ENCODE measurements at regions of chr15 and their contacts with region 1.

Region 1: GRCh38 chr15:66946578-66947164 is 118.7 kb upstream of the SMAD3 start:
- DNase-seq: peak; percentile 76
- ATAC-seq: peak; percentile 81 to 84
- H3K4me3 ChIP-seq: no peak overlapping the region
- H3K27ac ChIP-seq: no peak overlapping the region
- H3K4me1 ChIP-seq: peaks cover 12% of the 10 kb centered on the region
- H3K27me3 ChIP-seq: no peaks in the 10 kb centered on the region
- CTCF ChIP-seq: peak; percentile 93

Region 2: DNA sequence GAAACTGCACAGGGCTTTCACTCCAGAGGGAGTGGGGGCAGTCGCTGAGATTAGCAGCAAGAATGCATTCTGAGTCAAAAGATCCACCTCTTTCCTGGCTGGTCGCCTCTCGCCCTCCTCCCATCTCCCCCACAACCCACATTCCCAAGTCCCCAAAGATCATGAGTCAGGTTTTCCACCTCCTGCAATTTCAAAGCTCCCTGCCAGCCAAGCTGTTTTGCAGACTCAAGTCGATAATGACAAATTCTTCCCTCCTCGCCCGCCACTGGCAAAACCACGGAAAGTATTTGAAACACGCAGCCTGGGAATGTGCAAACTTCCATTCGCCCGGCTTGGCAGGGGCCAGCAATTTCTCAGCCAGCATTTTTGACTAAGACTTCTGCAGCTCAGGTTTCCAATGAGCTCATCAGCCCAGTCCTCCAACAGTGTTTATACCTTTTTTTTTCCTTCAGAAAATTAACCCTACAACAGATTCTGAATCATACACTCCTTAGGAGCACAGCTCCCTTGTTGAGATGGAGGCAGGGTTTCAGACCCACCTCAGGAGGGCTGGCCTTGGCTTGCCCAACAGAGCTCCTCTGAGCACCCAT is 63.3 kb before region 1 on chr15:
- intact Hi-C with region 1: no loop called
- DNase-seq: peak; percentile 73
- ATAC-seq: peak; percentile 81 to 89
- H3K4me3 ChIP-seq: no peak overlapping the region
- H3K27ac ChIP-seq: peak overlapping the region; percentile 48
- H3K4me1 ChIP-seq: peaks cover 21% of the 10 kb centered on the region
- H3K27me3 ChIP-seq: no peaks in the 10 kb centered on the region
- CTCF ChIP-seq: no peak

Region 3: DNA sequence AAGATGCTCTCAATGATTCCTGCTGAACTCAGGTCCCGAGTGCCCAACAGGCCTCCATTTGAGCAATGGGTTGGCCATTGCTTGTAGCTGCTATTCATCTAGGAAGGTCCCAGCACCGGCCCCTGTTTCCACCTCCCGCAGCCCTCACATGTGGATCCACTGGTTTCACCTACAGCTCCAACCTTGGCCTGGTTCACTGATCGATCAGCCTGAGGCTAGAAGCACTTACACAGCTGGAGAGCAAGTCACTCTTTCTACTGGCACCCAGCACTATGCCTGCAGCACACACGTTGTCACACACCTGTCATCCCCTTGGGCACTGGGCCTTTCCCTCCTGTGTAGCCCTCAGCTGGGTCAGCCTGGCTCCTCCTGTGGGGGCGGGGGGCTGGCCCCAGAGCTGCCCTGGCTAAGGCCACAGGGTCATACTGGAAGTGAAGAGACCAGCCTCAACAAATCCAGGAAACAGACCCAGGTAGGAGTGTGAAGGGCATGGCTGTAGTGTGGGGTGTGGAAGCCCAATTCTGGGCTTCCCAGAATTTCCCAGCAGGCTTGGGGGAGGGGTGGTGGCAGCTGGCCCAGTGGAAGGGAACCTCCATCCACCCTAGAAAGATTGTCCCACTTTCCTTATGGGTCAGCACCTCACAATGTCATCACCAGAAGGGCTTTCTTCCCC is 77.1 kb after region 1 on chr15:
- intact Hi-C with region 1: no loop called
- DNase-seq: no peak
- ATAC-seq: peak; percentile 12 to 28
- H3K4me3 ChIP-seq: no peak overlapping the region
- H3K27ac ChIP-seq: no peak overlapping the region
- H3K4me1 ChIP-seq: peaks cover 39% of the 10 kb centered on the region
- H3K27me3 ChIP-seq: no peaks in the 10 kb centered on the region
- CTCF ChIP-seq: no peak

Region 4: DNA sequence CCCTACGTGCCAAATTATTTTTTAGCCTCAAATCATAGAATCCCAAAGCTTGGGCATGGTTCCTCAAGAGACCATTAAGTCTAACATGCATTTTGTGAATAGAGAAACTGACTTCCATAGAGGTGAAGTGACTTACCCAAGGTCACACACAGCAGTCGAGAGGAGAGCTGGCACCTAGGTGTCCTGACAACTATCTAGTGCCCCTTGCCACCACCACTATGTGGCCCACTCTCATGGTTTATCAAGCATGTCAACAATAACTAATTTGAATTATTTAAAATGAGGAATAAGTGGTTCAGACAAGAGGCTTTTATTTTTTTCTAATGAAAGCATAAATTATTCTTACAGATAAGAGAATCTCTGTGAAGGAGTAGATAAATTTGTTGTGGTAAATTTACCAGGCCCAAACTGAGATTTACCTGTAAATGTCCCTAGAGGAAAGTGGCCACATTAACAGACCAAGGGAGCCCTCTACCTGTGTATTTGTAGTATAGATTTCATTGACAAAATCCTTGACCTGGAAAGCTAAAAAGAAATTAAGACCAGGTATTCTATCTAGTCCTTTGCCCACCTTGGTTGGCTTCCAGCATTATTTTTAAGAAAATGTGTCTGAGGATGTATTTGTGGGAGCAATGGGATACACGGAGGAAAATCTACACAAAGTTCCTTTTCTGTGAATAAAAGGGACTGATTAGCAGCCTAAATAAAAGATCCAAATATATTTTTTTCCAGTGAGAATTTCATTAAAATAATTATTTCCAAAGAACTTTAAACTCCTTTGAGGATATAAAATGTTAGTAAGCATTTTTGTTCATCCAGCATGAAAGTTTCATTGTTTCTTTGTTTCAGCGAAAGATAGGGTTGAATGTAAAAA is 357.1 kb after region 1 on chr15:
- intact Hi-C with region 1: loop called (anchors 10 kb)
- DNase-seq: no peak
- ATAC-seq: peak in 1 of 2 donors; percentile 59
- H3K4me3 ChIP-seq: no peak overlapping the region
- H3K27ac ChIP-seq: no peak overlapping the region
- H3K4me1 ChIP-seq: no peaks in the 10 kb centered on the region
- H3K27me3 ChIP-seq: no peaks in the 10 kb centered on the region
- CTCF ChIP-seq: peak; percentile 53

Measured in lower lobe of right lung (tissue), 2 donors.